Mammary epithelial cell (primary cell): ENCODE measurements at regions of chr1 and their contacts with region 1.

Region 1: GRCh38 chr1:115166531-115167091 is 77.3 kb upstream of the TSPAN2 start:
- DNase-seq: peak; percentile 59
- H3K4me3 ChIP-seq: no peak overlapping the region
- H3K27ac ChIP-seq: no peak overlapping the region
- H3K4me1 ChIP-seq: peaks cover 29% of the 10 kb centered on the region
- H3K27me3 ChIP-seq: no peaks in the 10 kb centered on the region
- CTCF ChIP-seq: no peak

Region 2: DNA sequence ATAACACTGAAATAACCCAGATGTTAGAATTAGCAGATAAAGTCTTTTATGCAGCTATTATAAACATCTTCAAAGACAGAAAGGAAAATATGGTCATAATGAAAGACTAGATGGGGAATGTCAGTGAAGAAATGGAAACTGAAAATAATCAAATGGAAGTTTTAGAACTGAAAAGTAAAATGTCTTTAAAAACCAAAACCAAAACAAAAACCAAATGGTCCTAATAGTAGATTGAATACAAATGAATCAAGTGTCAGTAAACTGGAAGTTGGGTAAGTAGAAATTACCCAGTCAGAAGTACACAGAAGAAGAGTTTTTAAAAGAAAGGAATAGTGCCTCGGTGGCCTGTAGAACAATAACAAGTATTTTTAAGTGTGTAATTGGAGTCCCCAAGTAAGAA is 239.2 kb before region 1 on chr1:
- CTCF ChIA-PET with region 1: no interaction called
- dilution Hi-C with region 1: no loop called
- in situ Hi-C with region 1: no loop called
- intact Hi-C with region 1: no loop called
- DNase-seq: no peak
- H3K4me3 ChIP-seq: no peak overlapping the region
- H3K27ac ChIP-seq: no peak overlapping the region
- H3K4me1 ChIP-seq: no peaks in the 10 kb centered on the region
- H3K27me3 ChIP-seq: peaks cover 6% of the 10 kb centered on the region
- CTCF ChIP-seq: no peak

Region 3: DNA sequence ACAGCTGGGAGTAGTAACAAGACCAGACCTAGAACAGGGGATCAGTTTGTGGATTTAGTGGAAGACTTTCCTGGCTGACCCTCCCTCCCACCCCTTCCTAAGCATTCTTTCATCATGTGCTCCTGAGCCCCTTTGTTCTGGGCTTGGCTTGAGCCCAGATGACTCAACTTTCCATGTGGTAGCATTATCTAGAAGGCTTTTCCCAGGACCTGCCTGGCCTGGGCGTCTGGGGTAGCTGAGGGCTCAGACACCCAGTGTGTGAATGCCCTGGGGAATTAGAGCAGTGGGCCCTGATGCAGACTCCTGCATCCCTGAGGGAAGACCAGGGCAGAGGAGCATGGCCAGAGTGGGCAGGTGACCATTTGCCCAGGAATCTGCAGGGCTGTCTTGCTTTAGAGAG is 33.2 kb before region 1 on chr1:
- CTCF ChIA-PET with region 1: no interaction called
- dilution Hi-C with region 1: no loop called
- in situ Hi-C with region 1: no loop called
- intact Hi-C with region 1: no loop called
- DNase-seq: no peak
- H3K4me3 ChIP-seq: no peak overlapping the region
- H3K27ac ChIP-seq: no peak overlapping the region
- H3K4me1 ChIP-seq: peaks cover 37% of the 10 kb centered on the region
- H3K27me3 ChIP-seq: no peaks in the 10 kb centered on the region
- CTCF ChIP-seq: no peak

Region 4: GRCh38 chr1:115210302-115210711 is 43.7 kb after region 1 on chr1:
- CTCF ChIA-PET with region 1: no interaction called
- dilution Hi-C with region 1: no loop called
- in situ Hi-C with region 1: no loop called
- intact Hi-C with region 1: loop called (anchors 2 kb)
- DNase-seq: peak; percentile 81
- H3K4me3 ChIP-seq: no peak overlapping the region
- H3K27ac ChIP-seq: no peak overlapping the region
- H3K4me1 ChIP-seq: peaks cover 19% of the 10 kb centered on the region
- H3K27me3 ChIP-seq: no peaks in the 10 kb centered on the region
- CTCF ChIP-seq: no peak

Region 5: GRCh38 chr1:115430441-115431116 is 264.0 kb after region 1 on chr1:
- CTCF ChIA-PET with region 1: no interaction called
- dilution Hi-C with region 1: no loop called
- in situ Hi-C with region 1: no loop called
- intact Hi-C with region 1: loop called (anchors 5 kb)
- DNase-seq: peak; percentile 96
- H3K4me3 ChIP-seq: no peak overlapping the region
- H3K27ac ChIP-seq: peak overlapping the region; percentile 58
- H3K4me1 ChIP-seq: peaks cover 55% of the 10 kb centered on the region
- H3K27me3 ChIP-seq: no peaks in the 10 kb centered on the region
- CTCF ChIP-seq: no peak

Region 6: DNA sequence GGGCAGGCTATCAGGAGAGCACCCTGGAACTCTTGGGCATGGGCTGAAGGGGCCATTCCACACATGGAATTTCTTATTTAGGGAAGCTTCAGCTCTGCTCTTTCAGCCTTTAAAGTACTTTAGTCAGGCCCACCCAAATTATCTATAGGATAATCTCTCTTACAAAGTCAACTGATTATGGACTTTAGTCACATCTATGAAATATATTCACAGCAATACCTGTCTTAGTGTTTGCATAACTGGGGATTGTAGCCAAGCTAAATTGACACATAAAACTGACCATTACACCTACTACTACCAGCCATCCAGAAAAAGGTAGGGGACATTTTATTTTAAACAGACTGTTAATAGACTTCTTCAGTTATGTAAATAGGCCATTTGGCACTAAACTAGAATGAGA is 360.3 kb after region 1 on chr1:
- CTCF ChIA-PET with region 1: interaction called, 11 read pairs
- dilution Hi-C with region 1: no loop called
- in situ Hi-C with region 1: no loop called
- intact Hi-C with region 1: no loop called
- DNase-seq: no peak
- H3K4me3 ChIP-seq: no peak overlapping the region
- H3K27ac ChIP-seq: no peak overlapping the region
- H3K4me1 ChIP-seq: peaks cover 23% of the 10 kb centered on the region
- H3K27me3 ChIP-seq: no peaks in the 10 kb centered on the region
- CTCF ChIP-seq: no peak